ENCODE measurements at regions of chr11 and their contacts with region 1.

Region 1: DNA sequence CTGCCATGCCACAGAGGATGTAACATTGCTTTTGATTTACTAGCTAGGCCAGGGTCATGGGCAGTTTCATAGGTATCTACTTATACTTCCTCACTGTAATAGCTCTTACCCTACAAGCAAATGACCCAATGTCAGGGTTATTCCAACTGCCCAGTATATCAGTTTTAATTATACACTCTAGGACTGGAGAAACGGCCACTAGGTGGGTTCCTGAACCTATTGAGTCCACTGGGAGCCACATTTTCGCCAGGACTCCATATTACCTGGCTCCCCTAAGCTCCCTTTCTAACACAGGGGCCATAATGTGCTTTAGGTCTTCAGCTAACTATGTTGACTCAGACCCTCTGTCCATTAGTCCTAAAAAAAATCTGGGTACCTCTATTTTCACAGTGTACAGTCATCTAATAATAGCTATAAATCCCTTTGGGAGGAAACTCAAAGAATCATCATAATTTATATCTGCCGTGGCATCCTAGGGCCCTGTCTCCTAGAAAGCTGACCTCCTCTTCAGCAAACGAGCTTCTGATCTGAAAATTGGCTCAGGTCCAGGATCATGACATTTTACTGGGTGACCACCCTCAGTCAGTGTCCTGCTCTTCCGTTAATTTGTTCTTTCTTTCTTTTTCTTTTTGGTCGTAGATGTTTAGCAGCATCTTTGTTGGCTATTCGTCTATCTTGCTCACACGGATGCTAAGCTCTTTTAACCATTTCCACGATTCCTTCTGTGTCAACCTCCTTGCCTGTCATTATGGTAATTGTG is 244.3 kb downstream of the FAM76B start:
- DNase-seq: no peak
- ATAC-seq: no peak
- H3K4me3 ChIP-seq: no peak overlapping the region
- H3K4me3 Mint-ChIP-seq: no peak overlapping the region
- H3K27ac ChIP-seq: no peak overlapping the region
- H3K27ac Mint-ChIP-seq: no peak overlapping the region
- H3K4me1 ChIP-seq: peaks cover 0 to 33% of the 10 kb centered on the region in 2 donors
- H3K4me1 Mint-ChIP-seq: peaks cover 14 to 49% (median 45%) of the 10 kb centered on the region in 7 donors
- H3K27me3 ChIP-seq: no peaks in the 10 kb centered on the region
- H3K27me3 Mint-ChIP-seq: no peaks in the 10 kb centered on the region

Region 2: DNA sequence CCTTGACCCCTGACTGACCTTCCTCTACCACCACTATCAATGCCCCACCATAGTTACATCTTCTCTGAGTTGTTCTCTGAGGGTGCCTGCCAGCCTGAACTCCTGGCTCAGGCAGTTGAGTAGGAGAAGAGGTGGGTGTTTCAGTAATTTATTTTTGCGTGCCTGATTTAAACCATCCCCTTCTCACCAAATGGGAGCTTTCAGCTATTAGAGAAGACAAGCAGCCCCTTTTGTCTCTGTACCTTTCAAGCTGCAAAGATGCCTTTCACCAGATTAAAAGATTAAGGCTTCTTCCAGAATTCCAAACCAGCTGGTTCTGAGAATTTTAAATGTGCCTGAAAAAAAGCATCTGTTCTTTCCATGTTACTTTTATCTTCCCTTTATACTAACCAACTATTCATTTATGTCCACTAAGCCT is 20.4 kb after region 1 on chr11:
- CTCF ChIA-PET with region 1: no interaction called
- POLR2A ChIA-PET with region 1: interaction called, 3 read pairs
- intact Hi-C with region 1: loop called in 1 of 2 experiments (anchors 2 kb)
- DNase-seq: no peak
- ATAC-seq: no peak
- H3K4me3 ChIP-seq: no peak overlapping the region
- H3K4me3 Mint-ChIP-seq: no peak overlapping the region
- H3K27ac ChIP-seq: no peak overlapping the region
- H3K27ac Mint-ChIP-seq: peak overlapping the region in 1 of 9 donors; percentile 56
- H3K4me1 ChIP-seq: peaks cover 0 to 3% of the 10 kb centered on the region in 2 donors
- H3K4me1 Mint-ChIP-seq: peaks cover 3 to 40% (median 26%) of the 10 kb centered on the region in 7 donors
- H3K27me3 ChIP-seq: no peaks in the 10 kb centered on the region
- H3K27me3 Mint-ChIP-seq: peaks cover 0 to 4% (median 0%) of the 10 kb centered on the region in 5 donors